ENCODE measurements at regions of chr10 and their contacts with region 1.

Region 1: GRCh38 chr10:117174439-117175214 is 22.7 kb upstream of the KCNK18 start:
- DNase-seq: peak; percentile 73
- ATAC-seq: peak; percentile 92
- H3K4me3 ChIP-seq: peak overlapping the region; percentile 52 to 72 (median 63)
- H3K27ac ChIP-seq: no peak overlapping the region
- H3K4me1 ChIP-seq: peaks cover 10% of the 10 kb centered on the region
- H3K27me3 ChIP-seq: peaks cover 0 to 32% of the 10 kb centered on the region in 2 experiments; a peak in 3 of 5 replicates
- CTCF ChIP-seq: peak; percentile 91
- EP300 ChIP-seq: no peak
- POLR2A ChIP-seq: no peak
- RAD21 ChIP-seq: peak; percentile 62; the same call in 1 of the 2 replicates

Region 2: GRCh38 chr10:116669832-116670644 is 504.6 kb before region 1 on chr10:
- CTCF ChIA-PET with region 1: no interaction called
- POLR2A ChIA-PET with region 1: no interaction called
- in situ Hi-C with region 1: loop called (anchors 10 kb)
- intact Hi-C with region 1: no loop called
- DNase-seq: peak; percentile 39
- ATAC-seq: peak; percentile 87
- H3K4me3 ChIP-seq: peak overlapping the region; percentile 60 to 69 (median 67); a peak in 5 of 6 replicates
- H3K27ac ChIP-seq: peak overlapping the region; percentile 56
- H3K4me1 ChIP-seq: peaks cover 35% of the 10 kb centered on the region
- H3K27me3 ChIP-seq: no peaks in the 10 kb centered on the region
- CTCF ChIP-seq: no peak
- EP300 ChIP-seq: no peak
- POLR2A ChIP-seq: 0 out of 4 replicates have a peak, but pooled peaks of 1 of the 2 experiments have one; percentile 32
- RAD21 ChIP-seq: no peak

Region 3: DNA sequence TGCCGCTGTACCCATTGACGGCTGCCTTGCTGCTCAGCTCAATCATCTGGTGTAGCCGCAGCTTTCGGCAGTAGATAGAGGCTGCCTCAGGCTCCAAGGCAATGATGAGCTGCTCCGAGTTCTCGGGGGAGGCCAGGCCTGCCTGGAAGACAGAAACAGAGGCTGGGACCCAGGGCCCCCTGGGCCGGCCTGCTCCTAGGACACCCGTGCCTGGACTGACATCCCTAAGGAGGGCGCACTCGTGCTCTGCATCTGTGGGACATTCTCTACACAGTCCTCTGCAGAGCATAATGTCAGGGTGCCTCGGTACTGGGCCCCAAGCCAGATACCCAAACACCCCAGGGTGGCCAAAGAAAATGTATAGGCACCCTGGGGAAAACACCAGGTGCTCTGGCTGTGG is 490.8 kb before region 1 on chr10:
- CTCF ChIA-PET with region 1: interaction called, 4 read pairs
- POLR2A ChIA-PET with region 1: no interaction called
- in situ Hi-C with region 1: loop called (anchors 10 kb)
- intact Hi-C with region 1: loop called (anchors 5 kb)
- DNase-seq: no peak
- ATAC-seq: no peak
- H3K4me3 ChIP-seq: no peak overlapping the region
- H3K27ac ChIP-seq: no peak overlapping the region
- H3K4me1 ChIP-seq: 0 out of 2 replicates have a peak, but pooled peaks cover 6% of the 10 kb centered on the region
- H3K27me3 ChIP-seq: no peaks in the 10 kb centered on the region
- CTCF ChIP-seq: no peak
- EP300 ChIP-seq: no peak
- POLR2A ChIP-seq: no peak
- RAD21 ChIP-seq: no peak

Region 4: DNA sequence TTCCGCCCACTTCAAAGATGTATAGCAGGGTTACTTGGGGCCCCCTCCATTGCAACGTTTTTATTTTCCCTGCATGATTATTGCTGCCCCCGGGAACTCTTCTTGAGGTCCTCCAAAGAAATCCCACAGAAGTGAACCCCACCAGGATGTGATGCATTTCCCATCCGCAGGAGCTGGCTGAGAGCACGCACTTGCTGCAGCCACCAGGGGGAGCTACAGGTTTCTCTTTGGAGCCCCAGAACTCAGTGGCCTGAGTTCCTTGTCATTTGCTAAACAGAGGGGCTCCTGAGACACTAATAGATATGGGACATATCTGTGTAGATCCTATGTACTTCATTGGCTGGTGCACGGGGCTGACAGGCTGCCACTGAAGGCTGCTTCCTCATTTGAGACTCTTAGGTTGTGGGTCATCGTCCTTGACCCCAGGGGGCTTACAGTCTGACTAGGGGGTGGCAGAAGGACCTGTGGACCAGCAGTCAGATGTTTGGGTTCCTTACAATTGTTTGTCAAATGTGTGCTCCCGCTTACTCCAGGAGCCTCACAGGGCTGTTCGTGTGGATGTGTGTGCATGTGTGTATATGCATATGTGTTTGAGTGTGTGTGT is 377.6 kb before region 1 on chr10:
- CTCF ChIA-PET with region 1: interaction called, 76 read pairs
- POLR2A ChIA-PET with region 1: no interaction called
- in situ Hi-C with region 1: loop called (anchors 5 kb)
- intact Hi-C with region 1: loop called (anchors 1 kb)
- DNase-seq: peak; percentile 60
- ATAC-seq: peak; percentile 96
- H3K4me3 ChIP-seq: no peak overlapping the region
- H3K27ac ChIP-seq: no peak overlapping the region
- H3K4me1 ChIP-seq: no peaks in the 10 kb centered on the region
- H3K27me3 ChIP-seq: peaks cover 0 to 1% of the 10 kb centered on the region in 2 experiments; a peak in 2 of 5 replicates
- CTCF ChIP-seq: peak; percentile 88
- EP300 ChIP-seq: no peak
- POLR2A ChIP-seq: no peak
- RAD21 ChIP-seq: peak; percentile 82

Region 5: DNA sequence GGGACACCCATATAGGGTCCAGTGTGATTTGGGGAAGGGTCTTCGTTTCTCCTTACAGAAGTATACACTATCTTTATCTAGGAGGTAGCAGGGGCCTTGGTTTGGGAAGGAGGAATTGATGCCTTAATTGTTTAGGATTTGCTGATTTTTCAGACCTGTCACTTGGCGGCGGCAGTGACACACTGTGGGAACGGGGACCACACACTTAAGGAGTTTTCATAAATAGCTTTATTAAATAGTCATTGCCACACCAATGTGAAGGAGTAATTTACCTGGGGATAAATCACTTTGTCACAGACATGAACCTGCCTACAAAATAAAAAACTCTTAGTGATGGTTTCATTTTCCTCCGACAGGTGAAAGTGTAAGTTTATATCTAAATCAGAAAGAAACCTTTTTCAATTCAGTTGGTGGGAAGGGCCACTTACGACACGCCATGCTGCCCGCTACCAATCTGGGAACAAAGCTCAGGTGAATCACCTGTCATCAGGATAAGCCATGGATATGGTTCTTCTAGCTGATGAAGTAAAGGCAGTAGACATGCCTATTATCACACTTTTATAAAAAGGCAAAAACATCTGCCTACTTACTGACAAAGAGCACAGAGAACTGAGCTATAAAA is 337.6 kb before region 1 on chr10:
- CTCF ChIA-PET with region 1: no interaction called
- POLR2A ChIA-PET with region 1: no interaction called
- in situ Hi-C with region 1: no loop called
- intact Hi-C with region 1: loop called (anchors 2 kb)
- DNase-seq: no peak
- ATAC-seq: no peak
- H3K4me3 ChIP-seq: no peak overlapping the region
- H3K27ac ChIP-seq: no peak overlapping the region
- H3K4me1 ChIP-seq: peaks cover 22% of the 10 kb centered on the region
- H3K27me3 ChIP-seq: peaks cover 1 to 6% of the 10 kb centered on the region in 2 experiments; a peak in 2 of 5 replicates
- CTCF ChIP-seq: peak; percentile 26
- EP300 ChIP-seq: no peak
- POLR2A ChIP-seq: no peak
- RAD21 ChIP-seq: no peak